Adrenal gland (tissue), 19 donors: ENCODE measurements at regions of chr15 and their contacts with region 1.

Region 1: GRCh38 chr15:63839722-63840121 is 6.0 kb upstream of the HERC1 start:
- DNase-seq: no peak
- H3K4me3 ChIP-seq: no peak overlapping the region
- H3K27ac ChIP-seq: no peak overlapping the region
- H3K4me1 ChIP-seq: no peaks in the 10 kb centered on the region
- H3K27me3 ChIP-seq: no peaks in the 10 kb centered on the region
- CTCF ChIP-seq: no peak
- POLR2A ChIP-seq: no peak

Region 2: DNA sequence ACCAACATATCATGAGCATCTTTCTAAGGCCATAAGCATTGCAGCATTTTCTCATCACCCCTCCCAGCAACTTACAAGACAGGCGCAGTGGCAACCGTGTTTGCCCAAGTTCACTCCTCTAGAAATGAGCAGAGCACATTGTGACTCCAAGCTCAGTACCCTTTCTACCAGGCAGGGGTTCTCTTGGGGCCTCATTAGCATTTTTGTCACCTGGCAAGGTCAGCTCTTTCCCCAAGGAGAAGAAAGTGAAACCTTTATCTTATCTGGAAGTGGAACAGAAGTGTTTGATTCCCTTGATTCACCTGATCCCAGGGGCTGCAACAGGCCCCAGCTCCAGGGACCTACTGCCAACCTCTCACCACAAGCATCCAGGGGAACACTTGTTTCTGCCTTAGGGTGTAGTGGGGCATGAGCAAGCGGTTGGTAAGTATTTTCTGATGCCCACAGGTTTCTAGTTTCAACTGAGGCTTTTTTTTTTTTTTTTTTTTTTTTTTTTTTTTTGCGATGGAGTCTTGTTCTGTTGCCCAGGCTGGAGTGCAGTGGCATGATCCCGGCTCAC is 38.1 kb after region 1 on chr15:
- intact Hi-C with region 1: loop called in 1 of 2 experiments (anchors 2 kb)
- DNase-seq: no peak
- H3K4me3 ChIP-seq: no peak overlapping the region
- H3K27ac ChIP-seq: no peak overlapping the region
- H3K4me1 ChIP-seq: peaks cover 4 to 12% of the 10 kb centered on the region in 2 donors
- H3K27me3 ChIP-seq: no peaks in the 10 kb centered on the region
- CTCF ChIP-seq: no peak
- POLR2A ChIP-seq: no peak